Activated CD8-positive, alpha-beta memory T cell treated with anti-CD3 and anti-CD28 coated beads, Interleukin-2, amount 10 ng/mL, durations not matched to agents 7 days and 5 days (primary cell): ENCODE measurements at regions of chr17 and their contacts with region 1.

Region 1: GRCh38 chr17:49707608-49708514 is at the start of gene SLC35B1:
- DNase-seq: peak; percentile 99
- ATAC-seq: peak; percentile 99
- H3K4me3 Mint-ChIP-seq: peak within 1 kb of the TSS; percentile 89
- H3K27ac Mint-ChIP-seq: peak within 1 kb of the TSS; percentile 96
- H3K4me1 Mint-ChIP-seq: peaks cover 45% of the 10 kb centered on the region
- H3K27me3 Mint-ChIP-seq: no peaks in the 10 kb centered on the region
- total RNA-seq, gene SLC35B1: 47.3 to 78.1 TPM

Region 2: GRCh38 chr17:49694847-49695683 is 12.8 kb before region 1 on chr17:
- CTCF ChIA-PET with region 1: interaction called, 50 read pairs
- DNase-seq: peak; percentile 83
- ATAC-seq: peak; percentile 38
- H3K4me3 Mint-ChIP-seq: no peak overlapping the region
- H3K27ac Mint-ChIP-seq: peak overlapping the region; percentile 83
- H3K4me1 Mint-ChIP-seq: peaks cover 33% of the 10 kb centered on the region
- H3K27me3 Mint-ChIP-seq: no peaks in the 10 kb centered on the region

Region 3: GRCh38 chr17:49748791-49749190 is 40.9 kb after region 1 on chr17:
- CTCF ChIA-PET with region 1: interaction called, 25 read pairs
- DNase-seq: peak; percentile 85
- ATAC-seq: peak; percentile 76
- H3K4me3 Mint-ChIP-seq: peak overlapping the region; percentile 69
- H3K27ac Mint-ChIP-seq: peak overlapping the region; percentile 94
- H3K4me1 Mint-ChIP-seq: peaks cover 74% of the 10 kb centered on the region
- H3K27me3 Mint-ChIP-seq: no peaks in the 10 kb centered on the region

Region 4: DNA sequence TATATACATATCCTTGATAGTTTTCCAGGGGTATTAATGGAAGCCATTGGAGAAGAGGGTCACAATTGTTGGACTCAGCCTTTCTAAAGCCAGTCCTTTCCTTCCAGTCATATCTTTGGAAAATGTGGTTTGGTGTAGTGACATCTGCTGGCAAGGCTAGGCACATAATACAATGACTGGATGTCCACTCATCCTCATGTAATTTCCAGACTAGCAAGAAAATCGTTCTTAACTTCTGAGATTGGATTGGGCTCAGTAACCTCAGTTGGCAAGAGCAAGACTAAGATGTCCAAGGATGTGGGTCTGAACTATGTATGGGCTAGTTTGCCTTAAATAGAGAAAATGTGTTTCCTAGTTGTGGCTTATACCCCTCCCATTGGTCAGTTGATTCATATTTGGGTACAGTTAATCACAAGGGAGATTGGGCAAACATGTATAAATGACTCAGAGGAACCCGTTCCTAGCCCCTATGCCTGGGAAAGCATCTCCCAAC is 71.9 kb after region 1 on chr17:
- CTCF ChIA-PET with region 1: interaction called, 10 read pairs
- DNase-seq: peak; percentile 55
- ATAC-seq: peak; percentile 63
- H3K4me3 Mint-ChIP-seq: no peak overlapping the region
- H3K27ac Mint-ChIP-seq: no peak overlapping the region
- H3K4me1 Mint-ChIP-seq: peaks cover 23% of the 10 kb centered on the region
- H3K27me3 Mint-ChIP-seq: no peaks in the 10 kb centered on the region